ENCODE measurements at regions of chr19 and their contacts with region 1.

Region 1: DNA sequence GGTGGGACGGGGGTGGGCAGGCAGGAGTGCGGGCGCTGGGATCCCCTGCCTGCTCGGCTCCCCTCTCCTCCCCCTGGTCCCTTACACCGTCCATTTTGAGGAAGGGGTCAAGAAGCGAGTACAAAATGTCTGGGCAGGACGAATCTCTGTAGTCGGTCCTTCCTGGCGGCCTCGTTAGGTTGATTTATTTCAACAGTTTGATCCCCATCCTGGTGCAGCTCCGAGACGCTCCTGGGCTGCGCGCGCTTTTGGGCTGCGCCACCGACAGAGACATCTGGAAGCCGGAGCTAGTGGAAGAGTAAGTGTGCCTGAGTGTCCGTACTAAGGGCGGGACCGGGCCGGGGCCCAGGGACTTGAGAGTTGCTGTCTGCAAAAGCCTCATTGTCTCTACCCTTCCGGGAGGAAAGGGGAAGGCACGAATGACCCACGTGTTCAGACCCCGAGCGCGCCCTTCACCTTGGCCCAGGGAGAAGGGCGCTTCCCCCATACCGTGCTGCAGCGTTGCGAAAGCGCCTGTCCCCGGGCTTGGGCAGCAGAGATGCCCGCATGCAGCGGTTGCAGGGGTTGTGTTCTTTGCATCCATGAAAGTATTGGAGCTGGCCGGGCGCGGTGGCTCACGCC is 1.8 kb downstream of the ZNF114 start:
- DNase-seq: peak; percentile 62
- H3K4me3 ChIP-seq: peak overlapping the region; percentile 60
- H3K27ac ChIP-seq: peak overlapping the region; percentile 72
- H3K4me1 ChIP-seq: peaks cover 3% of the 10 kb centered on the region
- H3K27me3 ChIP-seq: no peaks in the 10 kb centered on the region
- CTCF ChIP-seq: no peak

Region 2: GRCh38 chr19:48244281-48244680 is 27.4 kb before region 1 on chr19:
- CTCF ChIA-PET with region 1: no interaction called
- POLR2A ChIA-PET with region 1: no interaction called
- intact Hi-C with region 1: no loop called
- DNase-seq: peak; percentile 94
- H3K4me3 ChIP-seq: peak overlapping the region; percentile 26
- H3K27ac ChIP-seq: peak overlapping the region; percentile 80
- H3K4me1 ChIP-seq: peaks cover 53% of the 10 kb centered on the region
- H3K27me3 ChIP-seq: no peaks in the 10 kb centered on the region
- CTCF ChIP-seq: no peak

Region 3: GRCh38 chr19:48290771-48291488 is 19.3 kb after region 1 on chr19:
- CTCF ChIA-PET with region 1: interaction called, 5 read pairs
- POLR2A ChIA-PET with region 1: no interaction called
- intact Hi-C with region 1: loop called (anchors 1 kb)
- DNase-seq: peak; percentile 85
- H3K4me3 ChIP-seq: peak overlapping the region; percentile 69
- H3K27ac ChIP-seq: peak overlapping the region; percentile 71
- H3K4me1 ChIP-seq: no peaks in the 10 kb centered on the region
- H3K27me3 ChIP-seq: no peaks in the 10 kb centered on the region
- CTCF ChIP-seq: peak; percentile 97

Region 4: DNA sequence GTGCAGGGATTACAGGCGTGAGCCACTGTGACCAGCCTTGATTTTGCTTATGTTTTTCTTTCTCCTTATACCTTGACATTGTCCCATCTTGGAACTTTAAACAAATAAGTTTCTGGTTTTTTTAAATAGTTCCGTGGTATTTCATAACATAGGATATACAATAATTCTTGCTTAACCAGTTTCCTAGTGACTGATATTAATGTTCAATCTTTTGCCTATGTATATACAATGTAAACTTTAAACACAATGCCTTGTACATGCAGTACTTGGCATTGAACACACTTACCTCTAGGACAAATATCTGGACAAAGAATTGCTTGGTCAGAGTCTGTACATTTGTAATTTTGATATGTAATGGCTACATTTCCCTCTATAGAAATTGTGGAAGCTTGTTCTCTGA is 310.5 kb after region 1 on chr19:
- CTCF ChIA-PET with region 1: interaction called, 3 read pairs
- POLR2A ChIA-PET with region 1: interaction called, 7 read pairs
- intact Hi-C with region 1: loop called (anchors 5 kb)
- DNase-seq: no peak
- H3K4me3 ChIP-seq: no peak overlapping the region
- H3K27ac ChIP-seq: no peak overlapping the region
- H3K4me1 ChIP-seq: peaks cover 4% of the 10 kb centered on the region
- H3K27me3 ChIP-seq: no peaks in the 10 kb centered on the region
- CTCF ChIP-seq: no peak

Measured in A673 (cell line).